ENCODE measurements at regions of chrX and their contacts with region 1.

Region 1: GRCh38 chrX:155216179-155216939 is at the start of gene VBP1:
- DNase-seq: peak; percentile 90
- H3K4me3 ChIP-seq: peak within 1 kb of the TSS; percentile 72 to 89 (median 84)
- H3K27ac ChIP-seq: peak within 1 kb of the TSS; percentile 67
- H3K4me1 ChIP-seq: peaks cover 3% of the 10 kb centered on the region
- H3K27me3 ChIP-seq: no peaks in the 10 kb centered on the region
- CTCF ChIP-seq: peak; percentile 14 to 42
- total RNA-seq, gene VBP1: 42.2 to 51.3 TPM

Region 2: GRCh38 chrX:155263854-155264628 is 47.7 kb after region 1 on chrX and contains the start of gene RAB39B:
- CTCF ChIA-PET with region 1: no interaction called
- dilution Hi-C with region 1: no loop called
- in situ Hi-C with region 1: no loop called
- intact Hi-C with region 1: loop called (anchors 1 kb)
- DNase-seq: peak; percentile 60
- H3K4me3 ChIP-seq: peak within 1 kb of the TSS; percentile 36 to 42 (median 41)
- H3K27ac ChIP-seq: no peak within 1 kb of the TSS
- H3K4me1 ChIP-seq: no peaks in the 10 kb centered on the region
- H3K27me3 ChIP-seq: no peaks in the 10 kb centered on the region
- CTCF ChIP-seq: no peak
- total RNA-seq, gene RAB39B: 2.7 to 5.4 TPM

Region 3: DNA sequence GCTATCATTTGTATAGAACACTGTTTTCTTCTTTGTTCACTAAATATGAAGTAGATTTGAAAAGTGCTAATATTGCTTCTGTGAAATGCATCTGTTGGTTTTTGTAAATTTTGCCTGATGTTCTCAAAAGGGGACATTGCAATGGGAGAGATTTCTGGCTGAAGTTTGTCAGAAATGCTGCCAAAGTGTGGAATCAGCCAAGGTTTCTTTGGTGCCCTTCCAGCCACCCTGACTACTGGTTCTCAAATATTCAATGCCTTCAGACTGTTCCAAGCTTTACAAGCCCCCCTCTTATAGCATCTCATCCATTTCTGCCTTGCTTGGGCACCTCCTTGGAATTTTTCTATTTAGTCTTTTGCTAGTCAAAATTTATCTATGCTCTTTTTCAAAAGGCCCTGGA is 457.0 kb after region 1 on chrX:
- CTCF ChIA-PET with region 1: no interaction called
- dilution Hi-C with region 1: no loop called
- in situ Hi-C with region 1: no loop called
- intact Hi-C with region 1: no loop called
- DNase-seq: no peak
- H3K4me3 ChIP-seq: no peak overlapping the region
- H3K27ac ChIP-seq: no peak overlapping the region
- H3K4me1 ChIP-seq: no peaks in the 10 kb centered on the region
- H3K27me3 ChIP-seq: no peaks in the 10 kb centered on the region
- CTCF ChIP-seq: no peak